PC-9 (cell line): ENCODE measurements at regions of chr12 and their contacts with region 1.

Region 1: GRCh38 chr12:538731-539539 is 79.2 kb downstream of the B4GALNT3 start:
- DNase-seq: peak; percentile 88 to 89
- H3K4me3 ChIP-seq: no peak overlapping the region
- H3K27ac ChIP-seq: peak overlapping the region; percentile 57
- H3K4me1 ChIP-seq: peaks cover 32% of the 10 kb centered on the region
- H3K27me3 ChIP-seq: no peaks in the 10 kb centered on the region
- CTCF ChIP-seq: no peak

Region 2: GRCh38 chr12:442235-442884 is 96.6 kb before region 1 on chr12:
- CTCF ChIA-PET with region 1: interaction called, 16 read pairs
- POLR2A ChIA-PET with region 1: no interaction called
- intact Hi-C with region 1: no loop called
- DNase-seq: peak in 1 of 2 experiments; percentile 60
- H3K4me3 ChIP-seq: no peak overlapping the region
- H3K27ac ChIP-seq: no peak overlapping the region
- H3K4me1 ChIP-seq: no peaks in the 10 kb centered on the region
- H3K27me3 ChIP-seq: no peaks in the 10 kb centered on the region
- CTCF ChIP-seq: peak; percentile 95

Region 3: DNA sequence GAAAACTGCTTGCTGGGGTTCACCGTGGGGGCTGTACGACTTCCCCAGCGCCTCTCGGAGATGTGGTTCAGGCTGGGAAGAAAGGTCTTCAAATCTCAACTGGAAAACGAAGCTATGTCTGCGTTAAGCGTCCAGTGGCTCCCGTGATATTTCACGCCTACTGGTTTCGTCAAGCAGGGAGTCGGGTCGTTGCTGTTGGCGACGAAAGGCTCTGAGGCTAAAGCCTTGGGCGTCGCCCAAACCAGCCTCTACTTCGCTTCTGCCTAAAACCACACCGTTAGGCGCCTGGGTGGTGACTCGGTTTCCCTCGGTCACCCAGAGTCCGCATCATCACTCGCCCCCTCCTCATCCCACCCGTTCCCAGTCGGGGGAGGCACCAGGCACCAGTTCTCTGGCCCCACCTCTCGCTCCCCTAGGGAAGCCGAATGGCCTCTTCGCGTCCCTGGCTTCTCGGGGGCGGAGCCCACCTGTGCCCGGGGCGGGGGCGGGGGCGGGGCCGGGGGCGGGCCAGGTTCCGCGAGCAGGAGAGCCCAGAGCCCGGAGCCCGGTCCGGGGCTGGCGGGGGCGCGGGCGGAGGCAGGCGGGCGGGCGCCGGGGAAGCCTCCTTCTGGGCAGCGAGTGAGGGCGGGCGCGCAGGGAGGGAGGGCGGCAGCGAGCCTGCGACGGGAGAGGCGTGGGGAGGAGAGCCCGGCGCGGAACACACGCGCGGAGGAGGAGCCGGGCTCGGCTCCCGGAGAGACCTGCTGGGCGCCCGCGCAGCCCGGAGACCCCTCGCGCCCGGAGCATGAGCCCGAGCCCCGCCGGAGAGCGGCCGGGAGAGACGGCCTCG is 79.3 kb before region 1 on chr12 and contains the start of gene B4GALNT3:
- CTCF ChIA-PET with region 1: interaction called, 5 read pairs
- POLR2A ChIA-PET with region 1: interaction called, 8 read pairs
- intact Hi-C with region 1: loop called (anchors 2 kb)
- DNase-seq: peak in 1 of 2 experiments; percentile 67
- H3K4me3 ChIP-seq: peak within 1 kb of the TSS; percentile 59; the same call in 1 of the 2 replicates
- H3K27ac ChIP-seq: no peak within 1 kb of the TSS
- H3K4me1 ChIP-seq: peaks cover 24% of the 10 kb centered on the region
- H3K27me3 ChIP-seq: peaks cover 67% of the 10 kb centered on the region
- CTCF ChIP-seq: no peak
- total RNA-seq, gene B4GALNT3: 7.1 and 8.0 TPM in 2 replicates

Region 4: GRCh38 chr12:503111-503761 is 35.7 kb before region 1 on chr12:
- CTCF ChIA-PET with region 1: interaction called, 4 read pairs
- POLR2A ChIA-PET with region 1: interaction called, 33 read pairs
- intact Hi-C with region 1: loop called (anchors 1 kb)
- DNase-seq: peak; percentile 93 to 100
- H3K4me3 ChIP-seq: no peak overlapping the region
- H3K27ac ChIP-seq: peak overlapping the region; percentile 75
- H3K4me1 ChIP-seq: peaks cover 30% of the 10 kb centered on the region
- H3K27me3 ChIP-seq: 0 out of 2 replicates have a peak, but pooled peaks cover 3% of the 10 kb centered on the region
- CTCF ChIP-seq: no peak

Region 5: GRCh38 chr12:510071-510825 is 28.7 kb before region 1 on chr12:
- CTCF ChIA-PET with region 1: no interaction called
- POLR2A ChIA-PET with region 1: interaction called, 4 read pairs
- intact Hi-C with region 1: loop called (anchors 1 kb)
- DNase-seq: peak; percentile 10 to 83
- H3K4me3 ChIP-seq: no peak overlapping the region
- H3K27ac ChIP-seq: 0 out of 2 replicates have a peak overlapping the region, but pooled peaks have one; percentile 35
- H3K4me1 ChIP-seq: peaks cover 47% of the 10 kb centered on the region
- H3K27me3 ChIP-seq: no peaks in the 10 kb centered on the region
- CTCF ChIP-seq: no peak

Region 6: GRCh38 chr12:553205-554000 is 14.5 kb after region 1 on chr12:
- CTCF ChIA-PET with region 1: no interaction called
- POLR2A ChIA-PET with region 1: interaction called, 22 read pairs
- intact Hi-C with region 1: no loop called
- DNase-seq: no peak
- H3K4me3 ChIP-seq: no peak overlapping the region
- H3K27ac ChIP-seq: no peak overlapping the region
- H3K4me1 ChIP-seq: peaks cover 5% of the 10 kb centered on the region; the same call in 1 of the 2 replicates
- H3K27me3 ChIP-seq: no peaks in the 10 kb centered on the region
- CTCF ChIP-seq: no peak